Posterior cingulate gyrus (tissue), 11 donors: ENCODE measurements at regions of chr3 and their contacts with region 1.

Region 1: GRCh38 chr3:123201566-123202427 is at the start of gene SEC22A:
- DNase-seq: peak; percentile 83 to 99 (median 92)

Region 2: DNA sequence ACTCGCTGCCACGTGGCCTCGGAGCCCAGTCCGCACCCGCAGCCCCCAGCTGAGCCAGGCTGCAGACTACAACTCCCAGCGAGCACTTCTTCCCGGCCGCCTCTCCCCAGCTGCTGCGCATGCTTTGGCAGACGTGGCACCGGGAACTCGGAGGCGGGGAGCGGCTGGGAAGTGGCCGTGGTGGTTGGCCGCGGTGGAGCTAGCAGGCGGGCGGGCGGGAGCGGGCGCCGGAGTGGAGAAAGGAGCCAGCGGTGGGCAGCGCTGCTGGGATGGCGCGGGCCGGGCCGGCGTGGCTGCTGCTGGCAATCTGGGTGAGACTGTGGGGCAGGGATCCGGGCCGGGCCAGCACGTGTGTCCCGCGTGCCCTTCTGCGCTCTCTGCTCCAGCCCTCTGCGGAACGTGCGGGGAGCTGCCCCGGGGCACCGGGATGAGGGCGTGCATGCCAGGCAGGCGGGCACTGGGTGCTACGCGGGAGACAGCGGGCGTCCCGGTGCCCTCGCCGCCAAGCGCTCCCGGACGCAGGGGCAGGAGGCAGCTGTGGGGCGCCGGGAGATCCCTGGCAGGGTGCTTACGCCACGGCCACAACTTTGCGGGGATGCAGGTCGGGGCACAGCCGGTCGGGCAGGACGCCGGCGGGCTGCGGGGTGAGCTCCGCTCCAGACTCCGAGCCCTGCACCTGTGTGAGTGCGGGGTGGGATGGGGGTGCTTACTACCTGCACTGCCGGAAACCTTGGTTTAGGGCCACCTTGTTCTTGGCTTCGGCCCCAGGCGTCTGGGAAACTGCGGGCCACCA is 134.7 kb before region 1 on chr3 and contains the start of gene PDIA5:
- intact Hi-C with region 1: loop called (anchors 5 kb)
- DNase-seq: peak; percentile 85 to 99 (median 93)